CD4-positive, alpha-beta memory T cell (primary cell): ENCODE measurements at regions of chr11 and their contacts with region 1.

Region 1: DNA sequence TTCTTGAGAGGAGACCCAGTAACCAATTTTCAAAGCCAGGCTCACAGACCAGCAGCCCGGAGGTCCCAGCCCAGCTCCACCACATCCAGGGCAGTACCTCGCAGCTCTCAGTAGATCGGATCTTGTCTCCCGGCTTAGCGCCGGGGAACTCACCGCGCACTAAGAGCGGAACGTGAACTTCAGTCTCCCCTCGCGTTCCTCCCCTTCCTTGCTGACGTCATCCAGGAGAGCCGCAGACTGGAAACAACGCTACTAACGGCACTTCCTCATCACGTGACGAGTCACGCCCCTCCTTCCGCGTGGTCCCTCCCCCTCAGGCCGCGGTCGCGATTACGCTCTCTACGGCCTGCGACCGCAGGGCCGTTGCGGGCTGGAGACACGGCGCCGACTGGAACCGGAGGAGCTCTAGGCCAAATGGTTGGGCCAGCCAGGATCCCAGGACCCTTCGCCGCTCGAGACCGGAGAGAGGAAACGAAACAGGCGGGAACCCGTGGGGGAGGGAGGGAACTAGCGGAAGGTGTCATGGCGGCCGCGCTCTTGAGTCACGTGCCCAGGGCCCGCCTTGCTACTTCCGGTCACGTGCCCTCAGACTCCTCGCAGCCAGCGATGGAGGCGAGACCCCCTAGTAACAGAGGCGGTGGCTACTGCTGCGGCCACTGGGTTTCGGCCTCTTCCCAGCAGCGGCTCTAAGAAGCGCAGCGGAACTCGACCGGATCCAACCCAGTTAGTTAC is at the starts of genes GTF2H1 and HPS5:
- DNase-seq: peak; percentile 97 to 99 (median 98)
- H3K4me3 ChIP-seq: peak within 1 kb of the TSS; percentile 72 to 93
- H3K4me3 Mint-ChIP-seq: peak within 1 kb of the TSS; percentile 96 to 99 (median 98)
- H3K27ac ChIP-seq: peak within 1 kb of the TSS; percentile 99
- H3K27ac Mint-ChIP-seq: peak within 1 kb of the TSS; percentile 99 to 100 (median 100)
- H3K4me1 ChIP-seq: peaks cover 65% of the 10 kb centered on the region
- H3K4me1 Mint-ChIP-seq: peaks cover 50 to 86% (median 66%) of the 10 kb centered on the region in 4 donors
- H3K27me3 ChIP-seq: no peaks in the 10 kb centered on the region
- H3K27me3 Mint-ChIP-seq: no peaks in the 10 kb centered on the region
- total RNA-seq, gene GTF2H1: 60.1 to 61.6 TPM
- total RNA-seq, gene HPS5: 22.1 to 23.7 TPM

Region 2: GRCh38 chr11:18012863-18013781 is 309.0 kb before region 1 on chr11 and contains the start of gene SERGEF:
- CTCF ChIA-PET with region 1: no interaction called
- POLR2A ChIA-PET with region 1: interaction called, 6 read pairs
- intact Hi-C with region 1: loop called (anchors 2 kb)
- DNase-seq: peak; percentile 91 to 92 (median 91)
- H3K4me3 ChIP-seq: peak within 1 kb of the TSS; percentile 72 to 94
- H3K4me3 Mint-ChIP-seq: peak within 1 kb of the TSS; percentile 93 to 99 (median 96)
- H3K27ac ChIP-seq: peak within 1 kb of the TSS; percentile 73
- H3K27ac Mint-ChIP-seq: peak within 1 kb of the TSS; percentile 94 to 100 (median 98)
- H3K4me1 ChIP-seq: peaks cover 19% of the 10 kb centered on the region
- H3K4me1 Mint-ChIP-seq: peaks cover 18 to 41% (median 26%) of the 10 kb centered on the region in 4 donors
- H3K27me3 ChIP-seq: no peaks in the 10 kb centered on the region
- H3K27me3 Mint-ChIP-seq: no peaks in the 10 kb centered on the region
- total RNA-seq, gene SERGEF: 46.2 to 54.1 TPM

Region 3: DNA sequence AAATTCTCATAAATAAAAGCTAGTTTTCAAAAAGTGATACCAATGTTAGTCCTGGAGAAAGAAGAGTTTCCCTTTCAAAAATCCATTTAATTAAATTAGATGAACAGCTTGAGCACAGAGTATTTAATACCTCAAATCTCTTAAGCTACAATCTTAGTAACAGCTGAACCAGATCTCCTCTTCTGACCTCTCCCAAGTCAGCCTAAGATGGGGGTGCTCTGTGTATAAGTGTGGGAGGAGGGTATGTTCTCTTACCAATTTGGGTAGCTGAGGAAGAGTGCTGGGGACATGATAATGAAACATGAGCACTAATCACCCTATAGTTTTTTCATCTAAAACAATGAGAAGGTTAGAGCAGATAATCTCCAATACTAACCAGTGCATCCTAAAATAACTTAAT is 285.7 kb before region 1 on chr11:
- CTCF ChIA-PET with region 1: no interaction called
- POLR2A ChIA-PET with region 1: no interaction called
- intact Hi-C with region 1: no loop called
- DNase-seq: no peak
- H3K4me3 ChIP-seq: no peak overlapping the region
- H3K4me3 Mint-ChIP-seq: no peak overlapping the region
- H3K27ac ChIP-seq: no peak overlapping the region
- H3K27ac Mint-ChIP-seq: no peak overlapping the region
- H3K4me1 ChIP-seq: no peaks in the 10 kb centered on the region
- H3K4me1 Mint-ChIP-seq: no peaks in the 10 kb centered on the region
- H3K27me3 ChIP-seq: no peaks in the 10 kb centered on the region
- H3K27me3 Mint-ChIP-seq: no peaks in the 10 kb centered on the region

Region 4: GRCh38 chr11:18056561-18057181 is 265.5 kb before region 1 on chr11:
- CTCF ChIA-PET with region 1: no interaction called
- POLR2A ChIA-PET with region 1: no interaction called
- intact Hi-C with region 1: no loop called
- DNase-seq: no peak
- H3K4me3 ChIP-seq: no peak overlapping the region
- H3K4me3 Mint-ChIP-seq: no peak overlapping the region
- H3K27ac ChIP-seq: no peak overlapping the region
- H3K27ac Mint-ChIP-seq: no peak overlapping the region
- H3K4me1 ChIP-seq: no peaks in the 10 kb centered on the region
- H3K4me1 Mint-ChIP-seq: no peaks in the 10 kb centered on the region
- H3K27me3 ChIP-seq: no peaks in the 10 kb centered on the region
- H3K27me3 Mint-ChIP-seq: no peaks in the 10 kb centered on the region

Region 5: GRCh38 chr11:18332302-18332701 is 10.2 kb after region 1 on chr11:
- CTCF ChIA-PET with region 1: no interaction called
- POLR2A ChIA-PET with region 1: interaction called, 12 read pairs
- intact Hi-C with region 1: loop called (anchors 1 kb)
- DNase-seq: peak; percentile 45 to 82 (median 57)
- H3K4me3 ChIP-seq: peak overlapping the region; percentile 11 to 19
- H3K4me3 Mint-ChIP-seq: peak overlapping the region; percentile 62 to 89 (median 79)
- H3K27ac ChIP-seq: peak overlapping the region; percentile 71
- H3K27ac Mint-ChIP-seq: peak overlapping the region; percentile 92 to 95 (median 94)
- H3K4me1 ChIP-seq: peaks cover 69% of the 10 kb centered on the region
- H3K4me1 Mint-ChIP-seq: peaks cover 43 to 69% (median 60%) of the 10 kb centered on the region in 4 donors
- H3K27me3 ChIP-seq: no peaks in the 10 kb centered on the region
- H3K27me3 Mint-ChIP-seq: no peaks in the 10 kb centered on the region

Region 6: DNA sequence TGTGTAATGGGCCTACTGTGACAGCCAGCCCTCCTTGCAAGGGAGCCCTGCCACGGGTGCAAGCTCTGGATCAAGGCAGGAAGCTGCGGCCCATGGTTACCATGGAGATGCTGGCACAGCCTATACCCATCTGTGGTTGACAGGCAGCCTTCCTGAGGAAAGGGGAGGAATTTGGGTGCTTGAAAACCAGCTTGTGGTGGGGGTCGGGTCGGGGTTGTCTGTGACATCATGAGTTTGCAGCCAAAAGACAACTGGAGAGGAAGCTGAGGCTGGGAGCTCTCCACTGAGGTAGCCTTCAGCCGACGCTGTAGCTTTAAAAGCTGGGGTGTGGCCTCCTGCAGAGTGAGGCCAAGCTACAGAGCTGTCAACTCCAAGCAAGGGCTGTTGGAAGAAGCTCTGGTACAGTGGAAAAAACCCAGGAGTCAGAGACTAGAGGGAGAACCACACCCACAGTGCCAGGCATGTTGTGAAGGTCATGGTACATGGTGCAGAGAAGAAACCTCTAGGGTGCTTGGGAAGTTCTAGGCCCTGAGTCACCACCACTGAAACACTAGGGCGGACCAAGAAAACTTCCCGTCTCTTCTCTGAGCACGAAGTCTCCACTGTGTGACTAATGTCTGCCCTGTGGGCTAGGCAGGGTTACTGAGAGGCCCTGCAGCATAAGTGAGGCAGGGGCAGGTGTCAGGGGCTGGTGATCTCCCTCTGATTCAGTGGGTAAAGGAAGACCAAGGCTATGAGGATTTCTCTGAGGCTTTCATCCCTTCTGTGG is 61.4 kb after region 1 on chr11:
- CTCF ChIA-PET with region 1: interaction called, 6 read pairs
- POLR2A ChIA-PET with region 1: interaction called, 42 read pairs
- intact Hi-C with region 1: no loop called
- DNase-seq: peak; percentile 76 to 89 (median 81)
- H3K4me3 ChIP-seq: peak overlapping the region; percentile 29 to 32
- H3K4me3 Mint-ChIP-seq: peak overlapping the region; percentile 67 to 87 (median 82)
- H3K27ac ChIP-seq: peak overlapping the region; percentile 71
- H3K27ac Mint-ChIP-seq: peak overlapping the region; percentile 96 to 99 (median 98)
- H3K4me1 ChIP-seq: peaks cover 51% of the 10 kb centered on the region
- H3K4me1 Mint-ChIP-seq: peaks cover 30 to 51% (median 40%) of the 10 kb centered on the region in 4 donors
- H3K27me3 ChIP-seq: no peaks in the 10 kb centered on the region
- H3K27me3 Mint-ChIP-seq: no peaks in the 10 kb centered on the region